Activated T-helper 2 cell treated with anti-CD3 and anti-CD28 coated beads, Interferon-gamma antibody, Interleukin-2, Interleukin-4, amounts not matched to agents 10 μg/mL and 5 μg/mL and 100 μg/mL, durations not matched to agents 14 hours and 24 hours and 36 hours (primary cell): ENCODE measurements at regions of chr7 and their contacts with region 1.

Region 1: GRCh38 chr7:148940702-148941597 is 56.9 kb upstream of the EZH2 start:
- DNase-seq: peak; percentile 66
- H3K4me3 Mint-ChIP-seq: peak overlapping the region; percentile 94
- H3K27ac Mint-ChIP-seq: peak overlapping the region; percentile 99
- H3K4me1 Mint-ChIP-seq: peaks cover 20% of the 10 kb centered on the region
- H3K27me3 Mint-ChIP-seq: no peaks in the 10 kb centered on the region

Region 2: DNA sequence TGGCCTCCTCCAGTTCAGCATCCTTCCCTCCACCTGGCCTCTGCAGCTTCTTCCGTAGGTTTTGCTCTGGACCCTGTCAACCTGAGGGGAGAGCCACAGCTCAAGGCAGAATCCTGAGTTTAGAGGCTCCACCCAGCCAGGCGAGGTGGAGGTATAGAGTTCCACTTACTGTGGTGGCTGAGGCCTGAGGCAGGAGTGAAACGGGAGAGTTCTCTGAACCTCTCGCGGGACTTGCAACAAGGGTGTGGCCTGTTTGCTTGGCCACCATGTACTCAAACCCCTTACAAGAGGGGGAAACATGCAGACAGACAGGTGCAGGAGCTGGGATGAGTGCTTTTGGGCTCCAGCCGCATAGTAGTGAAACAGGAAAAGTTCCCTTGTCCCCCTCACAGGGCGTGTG is 504.4 kb before region 1 on chr7:
- intact Hi-C with region 1: no loop called
- DNase-seq: no peak
- H3K4me3 Mint-ChIP-seq: no peak overlapping the region
- H3K27ac Mint-ChIP-seq: no peak overlapping the region
- H3K4me1 Mint-ChIP-seq: no peaks in the 10 kb centered on the region
- H3K27me3 Mint-ChIP-seq: peaks cover 9% of the 10 kb centered on the region

Region 3: DNA sequence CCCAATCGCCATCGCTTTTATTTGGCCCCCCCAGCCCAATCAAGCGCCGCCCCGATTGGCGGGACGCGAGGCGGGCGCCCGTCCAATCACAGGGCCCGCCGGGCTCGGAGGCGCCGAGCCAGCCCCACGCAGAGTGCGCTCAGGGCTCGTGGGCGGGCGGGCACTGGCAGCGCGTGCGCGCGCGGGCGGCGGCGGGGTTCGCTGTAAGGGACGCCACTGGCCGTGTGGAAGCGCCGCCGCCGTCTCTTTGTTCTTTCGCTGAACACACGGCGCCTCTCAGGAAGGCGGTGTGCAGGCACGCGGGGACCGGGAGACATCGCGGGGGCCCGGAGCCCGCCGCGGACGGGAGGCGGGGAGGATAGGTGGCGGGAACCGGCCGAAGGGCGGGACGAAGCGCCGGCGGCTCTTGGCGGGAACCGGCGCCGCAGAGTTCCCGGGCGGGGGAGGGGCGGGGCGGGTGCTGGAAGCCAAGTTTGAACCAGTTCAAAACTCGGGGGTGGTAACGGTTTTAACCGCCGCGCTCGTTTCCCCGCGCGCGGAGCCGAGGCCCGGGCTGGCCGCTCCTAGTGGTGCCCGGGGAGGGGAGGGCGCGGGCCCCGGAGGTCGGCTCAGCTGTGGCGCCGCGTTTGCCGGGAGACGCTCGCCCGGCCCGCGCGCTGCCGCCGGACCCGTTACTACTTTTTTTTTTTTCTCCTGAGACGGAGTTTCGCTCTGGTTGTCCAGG is 56.5 kb before region 1 on chr7:
- intact Hi-C with region 1: loop called (anchors 1 kb)
- DNase-seq: peak; percentile 92
- H3K4me3 Mint-ChIP-seq: peak overlapping the region; percentile 94
- H3K27ac Mint-ChIP-seq: peak overlapping the region; percentile 98
- H3K4me1 Mint-ChIP-seq: peaks cover 29% of the 10 kb centered on the region
- H3K27me3 Mint-ChIP-seq: no peaks in the 10 kb centered on the region

Region 4: GRCh38 chr7:148927123-148928045 is 13.6 kb before region 1 on chr7:
- intact Hi-C with region 1: loop called (anchors 1 kb)
- DNase-seq: no peak
- H3K4me3 Mint-ChIP-seq: no peak overlapping the region
- H3K27ac Mint-ChIP-seq: peak overlapping the region; percentile 80
- H3K4me1 Mint-ChIP-seq: peaks cover 30% of the 10 kb centered on the region
- H3K27me3 Mint-ChIP-seq: no peaks in the 10 kb centered on the region

Region 5: DNA sequence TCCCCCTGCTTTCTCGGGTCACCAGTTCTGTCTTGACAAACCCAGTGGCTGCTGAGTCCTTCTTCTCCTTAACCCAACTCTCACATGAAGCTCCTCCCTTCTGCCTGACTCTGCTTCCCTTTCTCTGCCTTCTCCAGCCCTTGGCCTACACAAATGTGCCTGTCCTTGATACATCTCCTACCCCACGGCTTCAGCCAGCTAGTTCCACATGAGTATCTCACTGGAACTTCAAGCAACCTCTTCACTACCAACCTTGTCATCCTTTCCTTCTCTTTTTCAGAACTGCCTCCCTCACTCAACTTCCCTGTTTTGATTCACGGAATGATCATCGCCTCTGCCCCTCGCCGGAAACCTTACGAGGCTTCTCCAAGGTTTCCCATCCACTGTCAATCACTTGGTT is 31.4 kb after region 1 on chr7:
- intact Hi-C with region 1: no loop called
- DNase-seq: no peak
- H3K4me3 Mint-ChIP-seq: no peak overlapping the region
- H3K27ac Mint-ChIP-seq: no peak overlapping the region
- H3K4me1 Mint-ChIP-seq: no peaks in the 10 kb centered on the region
- H3K27me3 Mint-ChIP-seq: peaks cover 5% of the 10 kb centered on the region

Region 6: GRCh38 chr7:148983187-148984146 is 42.5 kb after region 1 on chr7:
- intact Hi-C with region 1: loop called (anchors 2 kb)
- DNase-seq: peak; percentile 71
- H3K4me3 Mint-ChIP-seq: peak overlapping the region; percentile 97
- H3K27ac Mint-ChIP-seq: peak overlapping the region; percentile 85
- H3K4me1 Mint-ChIP-seq: peaks cover 39% of the 10 kb centered on the region
- H3K27me3 Mint-ChIP-seq: peaks cover 5% of the 10 kb centered on the region

Region 7: DNA sequence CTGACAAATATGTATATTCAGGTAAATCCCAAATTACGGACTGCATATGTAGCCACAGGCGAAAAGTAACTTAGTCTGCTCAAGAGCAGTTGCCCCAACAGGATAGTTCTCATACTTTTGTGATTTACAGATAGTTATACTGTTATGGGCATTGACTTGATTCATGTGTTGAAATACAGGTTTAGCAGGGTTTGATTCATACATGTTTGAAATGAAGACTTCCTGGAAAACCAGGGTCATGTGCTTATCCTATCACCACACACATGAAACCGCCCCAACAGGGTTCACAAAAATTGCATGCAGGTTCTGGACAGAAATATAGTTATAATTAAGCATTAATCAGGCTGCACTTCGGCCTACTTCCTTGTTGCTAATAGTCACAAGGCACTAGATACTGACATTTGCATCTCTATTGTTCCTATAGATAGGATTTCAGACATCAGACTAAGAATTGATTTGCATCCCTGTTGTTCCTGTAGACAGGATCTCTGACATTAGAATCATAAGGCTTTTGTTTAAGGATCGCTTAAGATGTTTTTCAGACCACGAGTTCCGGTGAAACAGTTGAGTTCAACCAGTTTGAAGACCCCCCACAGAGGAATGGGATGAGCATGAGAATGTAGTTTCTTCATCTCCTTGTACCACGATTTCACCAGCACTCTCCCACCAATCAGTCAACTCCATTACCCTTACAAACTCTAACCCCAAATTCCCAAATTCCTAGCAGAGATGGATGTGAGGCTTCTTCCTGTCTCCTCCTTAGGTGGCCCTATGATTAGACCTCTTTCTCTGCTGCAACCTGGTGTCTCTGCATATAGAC is 204.3 kb after region 1 on chr7:
- intact Hi-C with region 1: no loop called
- DNase-seq: no peak
- H3K4me3 Mint-ChIP-seq: peak overlapping the region; percentile 64
- H3K27ac Mint-ChIP-seq: peak overlapping the region; percentile 56
- H3K4me1 Mint-ChIP-seq: peaks cover 22% of the 10 kb centered on the region
- H3K27me3 Mint-ChIP-seq: no peaks in the 10 kb centered on the region